ENCODE measurements at regions of chr2 and their contacts with region 1.

Region 1: GRCh38 chr2:157194097-157194688 is 63.3 kb upstream of the GALNT5 start:
- DNase-seq: peak; percentile 42
- ATAC-seq: peak; percentile 68
- H3K4me3 Mint-ChIP-seq: no peak overlapping the region
- H3K27ac Mint-ChIP-seq: no peak overlapping the region
- H3K4me1 Mint-ChIP-seq: no peaks in the 10 kb centered on the region
- H3K27me3 Mint-ChIP-seq: peaks cover 4% of the 10 kb centered on the region
- CTCF ChIP-seq: peak; percentile 75

Region 2: DNA sequence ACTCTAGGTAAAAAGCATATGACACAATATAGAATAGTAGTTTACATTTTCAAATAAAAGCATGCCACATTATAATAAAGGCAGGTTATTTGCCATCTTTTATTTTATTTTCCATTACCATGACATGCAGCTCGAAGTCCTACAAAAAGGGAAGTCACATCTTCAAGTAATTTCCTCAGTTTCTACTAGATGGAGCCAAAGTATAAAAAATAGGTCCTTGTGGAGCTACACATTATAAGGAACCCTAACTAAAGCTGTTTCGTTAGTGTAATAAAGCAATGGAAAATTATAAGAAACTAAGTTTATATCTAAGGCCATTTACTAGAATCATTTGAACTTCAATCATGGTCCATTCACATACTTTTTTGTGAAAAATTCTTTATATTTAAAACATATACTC is 1821.2 kb before region 1 on chr2:
- CTCF ChIA-PET with region 1: no interaction called
- POLR2A ChIA-PET with region 1: no interaction called
- intact Hi-C with region 1: loop called (anchors 5 kb)
- DNase-seq: no peak
- ATAC-seq: no peak
- H3K4me3 Mint-ChIP-seq: no peak overlapping the region
- H3K27ac Mint-ChIP-seq: no peak overlapping the region
- H3K4me1 Mint-ChIP-seq: no peaks in the 10 kb centered on the region
- H3K27me3 Mint-ChIP-seq: no peaks in the 10 kb centered on the region
- CTCF ChIP-seq: no peak

Region 3: DNA sequence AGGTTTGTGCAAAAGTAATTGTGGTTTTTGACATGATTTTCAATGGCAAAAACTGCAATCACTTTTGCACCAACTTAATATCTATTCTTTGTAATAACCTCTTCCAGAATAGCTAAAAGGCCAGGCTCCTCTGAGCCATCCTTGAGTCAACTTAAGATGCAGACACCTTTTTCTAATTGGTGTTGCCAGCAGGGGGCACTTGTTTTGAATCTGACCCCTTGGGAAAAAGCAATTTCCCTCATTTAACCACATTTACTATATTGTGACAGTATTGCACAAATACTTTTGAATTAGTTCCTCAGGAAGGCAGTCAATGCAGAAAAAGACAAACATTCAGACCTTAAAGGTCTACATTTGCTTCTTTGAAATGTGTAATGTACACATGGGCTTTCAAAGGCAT is 15.3 kb before region 1 on chr2:
- CTCF ChIA-PET with region 1: interaction called, 24 read pairs
- POLR2A ChIA-PET with region 1: no interaction called
- intact Hi-C with region 1: no loop called
- DNase-seq: peak; percentile 14
- ATAC-seq: no peak
- H3K4me3 Mint-ChIP-seq: no peak overlapping the region
- H3K27ac Mint-ChIP-seq: no peak overlapping the region
- H3K4me1 Mint-ChIP-seq: peaks cover 4% of the 10 kb centered on the region
- H3K27me3 Mint-ChIP-seq: peaks cover 7% of the 10 kb centered on the region
- CTCF ChIP-seq: no peak

Region 4: GRCh38 chr2:157363612-157364101 is 169.5 kb after region 1 on chr2:
- CTCF ChIA-PET with region 1: no interaction called
- POLR2A ChIA-PET with region 1: no interaction called
- intact Hi-C with region 1: no loop called
- DNase-seq: no peak
- ATAC-seq: peak; percentile 43
- H3K4me3 Mint-ChIP-seq: no peak overlapping the region
- H3K27ac Mint-ChIP-seq: peak overlapping the region; percentile 43
- H3K4me1 Mint-ChIP-seq: peaks cover 38% of the 10 kb centered on the region
- H3K27me3 Mint-ChIP-seq: no peaks in the 10 kb centered on the region
- CTCF ChIP-seq: no peak

Measured in activated CD8-positive, alpha-beta T cell treated with anti-CD3 and anti-CD28 coated beads for 36 hours (primary cell).